ENCODE measurements at regions of chr15 and their contacts with region 1.

Region 1: DNA sequence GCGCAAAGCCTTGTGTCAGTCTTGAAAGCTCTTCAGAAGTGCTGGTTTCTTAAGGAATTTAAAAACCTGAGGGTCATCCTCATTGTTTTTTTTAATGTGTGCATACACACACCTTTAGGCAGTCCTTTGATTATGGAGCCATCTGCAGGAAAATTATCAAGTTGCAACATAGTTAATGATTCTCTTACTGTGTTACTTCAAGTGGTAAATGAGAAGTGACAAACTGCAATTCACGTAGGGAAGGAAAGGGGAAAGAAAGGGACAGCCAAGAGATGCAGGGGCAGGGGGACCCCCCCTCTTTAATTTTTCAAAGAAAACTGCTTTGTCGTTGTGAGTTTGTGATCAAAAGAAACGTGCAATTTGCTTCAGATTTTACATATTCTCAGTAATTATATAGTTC is 162.4 kb upstream of the CGNL1 start:
- DNase-seq: peak in 2 of 9 experiments; percentile 28 to 44
- ATAC-seq: no peak
- H3K4me3 ChIP-seq: no peak overlapping the region
- H3K4me3 Mint-ChIP-seq: no peak overlapping the region
- H3K27ac ChIP-seq: no peak overlapping the region
- H3K27ac Mint-ChIP-seq: no peak overlapping the region
- H3K4me1 ChIP-seq: peaks cover 7% of the 10 kb centered on the region
- H3K4me1 Mint-ChIP-seq: peaks cover 28% of the 10 kb centered on the region
- H3K27me3 ChIP-seq: no peaks in the 10 kb centered on the region
- H3K27me3 Mint-ChIP-seq: no peaks in the 10 kb centered on the region
- CTCF ChIP-seq: peak; percentile 42

Region 2: GRCh38 chr15:56491110-56491722 is 722.6 kb before region 1 on chr15:
- CTCF ChIA-PET with region 1: interaction called, 6 read pairs
- POLR2A ChIA-PET with region 1: no interaction called
- intact Hi-C with region 1: loop called (anchors 1 to 5 kb)
- DNase-seq: peak; percentile 19 to 70 (median 43)
- ATAC-seq: no peak
- H3K4me3 ChIP-seq: no peak overlapping the region
- H3K4me3 Mint-ChIP-seq: no peak overlapping the region
- H3K27ac ChIP-seq: no peak overlapping the region
- H3K27ac Mint-ChIP-seq: no peak overlapping the region
- H3K4me1 ChIP-seq: no peaks in the 10 kb centered on the region
- H3K4me1 Mint-ChIP-seq: no peaks in the 10 kb centered on the region
- H3K27me3 ChIP-seq: peaks cover 0 to 3% of the 10 kb centered on the region in 2 experiments
- H3K27me3 Mint-ChIP-seq: no peaks in the 10 kb centered on the region
- CTCF ChIP-seq: peak; percentile 66

Region 3: DNA sequence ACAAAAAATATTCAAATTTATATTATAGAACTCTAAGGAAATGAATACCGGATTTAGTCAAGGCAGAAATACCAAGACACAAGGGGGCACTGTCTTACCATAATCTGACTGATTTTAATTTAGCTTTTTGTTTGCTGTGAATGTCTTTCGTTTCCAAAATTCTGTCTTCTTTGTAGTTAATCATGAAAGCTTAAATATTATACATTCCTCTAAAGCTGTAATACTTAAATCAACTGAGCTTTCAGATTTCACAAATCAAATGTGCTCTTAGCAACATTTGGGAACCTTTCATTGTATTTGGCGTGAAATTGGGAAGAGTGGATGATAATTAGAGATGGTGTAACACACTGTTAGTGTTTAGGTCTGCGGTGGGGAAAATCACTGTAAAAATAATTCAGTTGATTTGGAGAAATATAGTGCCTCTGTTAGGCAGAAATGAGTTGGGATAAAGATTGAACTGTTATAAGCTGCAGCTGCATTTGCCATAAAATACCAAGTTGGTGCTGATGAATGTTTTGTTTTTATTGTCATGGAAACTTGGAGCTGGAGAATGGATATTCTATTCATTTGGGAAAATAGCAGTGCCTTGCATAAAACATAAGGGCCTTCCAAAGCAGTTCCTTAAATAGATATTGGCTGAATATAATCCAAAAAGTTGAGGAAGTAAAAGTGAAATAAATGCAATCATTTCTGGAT is 67.2 kb before region 1 on chr15:
- CTCF ChIA-PET with region 1: interaction called, 6 read pairs
- POLR2A ChIA-PET with region 1: no interaction called
- intact Hi-C with region 1: loop called in 1 of 2 experiments (anchors 5 kb)
- DNase-seq: peak in 2 of 9 experiments; percentile 36 to 51
- ATAC-seq: no peak
- H3K4me3 ChIP-seq: no peak overlapping the region
- H3K4me3 Mint-ChIP-seq: no peak overlapping the region
- H3K27ac ChIP-seq: no peak overlapping the region
- H3K27ac Mint-ChIP-seq: no peak overlapping the region
- H3K4me1 ChIP-seq: no peaks in the 10 kb centered on the region
- H3K4me1 Mint-ChIP-seq: peaks cover 4% of the 10 kb centered on the region
- H3K27me3 ChIP-seq: no peaks in the 10 kb centered on the region
- H3K27me3 Mint-ChIP-seq: no peaks in the 10 kb centered on the region
- CTCF ChIP-seq: peak; percentile 65

Region 4: DNA sequence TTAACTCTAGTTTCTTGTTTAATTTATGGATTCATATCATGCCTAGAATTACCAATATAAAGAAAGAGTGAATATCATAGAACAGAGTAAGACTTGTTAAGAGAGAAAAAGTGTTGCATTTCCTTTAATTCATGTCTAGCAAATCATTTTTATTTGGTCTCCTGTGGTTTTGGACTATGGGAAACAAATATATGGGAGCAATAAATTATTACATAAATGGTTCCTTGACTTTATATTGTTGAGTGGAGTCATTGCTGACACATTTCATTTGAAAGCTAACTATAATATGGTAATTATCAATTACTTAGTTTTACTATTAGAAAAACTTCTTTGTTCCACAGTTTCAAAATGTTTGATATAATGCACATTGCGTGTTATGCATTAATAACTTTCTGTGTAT is 17.7 kb after region 1 on chr15:
- CTCF ChIA-PET with region 1: interaction called, 3 read pairs
- POLR2A ChIA-PET with region 1: no interaction called
- intact Hi-C with region 1: loop called in 1 of 2 experiments (anchors 2 kb)
- DNase-seq: no peak
- ATAC-seq: no peak
- H3K4me3 ChIP-seq: no peak overlapping the region
- H3K4me3 Mint-ChIP-seq: no peak overlapping the region
- H3K27ac ChIP-seq: no peak overlapping the region
- H3K27ac Mint-ChIP-seq: no peak overlapping the region
- H3K4me1 ChIP-seq: peaks cover 9% of the 10 kb centered on the region
- H3K4me1 Mint-ChIP-seq: peaks cover 19% of the 10 kb centered on the region
- H3K27me3 ChIP-seq: no peaks in the 10 kb centered on the region
- H3K27me3 Mint-ChIP-seq: no peaks in the 10 kb centered on the region
- CTCF ChIP-seq: no peak